ENCODE measurements at regions of chr18 and their contacts with region 1.

Region 1: GRCh38 chr18:61322265-61322873 is 10.9 kb upstream of the CDH20 start:
- DNase-seq: peak; percentile 66

Region 2: GRCh38 chr18:61502472-61502871 is 180.1 kb after region 1 on chr18:
- CTCF ChIA-PET with region 1: interaction called, 38 read pairs
- POLR2A ChIA-PET with region 1: interaction called, 3 read pairs
- DNase-seq: peak; percentile 43

Region 3: GRCh38 chr18:61549456-61549855 is 227.1 kb after region 1 on chr18:
- CTCF ChIA-PET with region 1: no interaction called
- POLR2A ChIA-PET with region 1: no interaction called
- DNase-seq: no peak